Posterior vena cava (tissue), 2 donors: ENCODE measurements at regions of chr1 and their contacts with region 1.

Region 1: GRCh38 chr1:11623702-11624101 is 30.5 kb downstream of the FBXO2 start:
- DNase-seq: no peak

Region 2: GRCh38 chr1:11592752-11593151 is 30.9 kb before region 1 on chr1:
- intact Hi-C with region 1: loop called in 1 of 2 experiments (anchors 1 kb)
- DNase-seq: no peak